Endothelial cell of umbilical vein (primary cell): ENCODE measurements at regions of chrX and their contacts with region 1.

Region 1: GRCh38 chrX:136028251-136028984 is 43.2 kb downstream of the SLC9A6 start:
- DNase-seq: peak; percentile 67
- H3K4me3 ChIP-seq: no peak overlapping the region
- H3K27ac ChIP-seq: no peak overlapping the region
- H3K4me1 ChIP-seq: peaks cover 18% of the 10 kb centered on the region
- H3K27me3 ChIP-seq: no peaks in the 10 kb centered on the region
- CTCF ChIP-seq: peak; percentile 21 to 24
- POLR2A ChIP-seq: no peak

Region 2: DNA sequence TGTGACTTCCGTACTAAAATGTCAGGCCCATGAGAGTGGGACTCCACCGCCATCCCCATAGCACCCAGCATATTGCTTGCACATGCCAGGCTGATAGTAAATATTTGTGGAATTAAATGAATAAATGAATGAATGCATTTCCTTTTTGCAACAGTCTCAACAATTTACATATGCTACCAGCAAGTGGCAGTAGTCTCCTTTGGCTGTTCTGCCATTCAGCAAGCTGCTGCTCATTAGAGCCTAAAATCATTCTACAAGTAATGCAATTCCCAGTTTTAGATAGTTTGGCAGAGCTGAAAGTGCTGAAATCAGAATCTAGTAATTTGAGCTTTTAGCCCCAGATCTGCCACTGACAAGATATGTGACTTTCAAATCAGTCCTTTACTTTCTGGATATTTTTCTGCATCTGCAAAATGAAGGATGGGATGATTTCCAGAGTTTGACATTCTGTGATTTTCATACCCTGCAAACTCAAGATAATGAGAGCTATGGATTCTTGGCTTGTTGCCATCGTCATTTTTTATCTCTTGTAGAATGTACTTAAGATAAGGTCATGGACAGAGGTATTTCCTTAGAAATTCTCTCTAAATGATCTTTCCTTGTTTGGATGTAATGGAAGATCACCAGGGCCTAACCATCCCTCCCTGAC is 543.7 kb before region 1 on chrX:
- CTCF ChIA-PET with region 1: no interaction called
- POLR2A ChIA-PET with region 1: no interaction called
- dilution Hi-C with region 1: no loop called
- intact Hi-C with region 1: no loop called
- DNase-seq: peak; percentile 46
- H3K4me3 ChIP-seq: no peak overlapping the region
- H3K27ac ChIP-seq: no peak overlapping the region
- H3K4me1 ChIP-seq: no peaks in the 10 kb centered on the region
- H3K27me3 ChIP-seq: no peaks in the 10 kb centered on the region
- CTCF ChIP-seq: peak; percentile 32 to 45
- POLR2A ChIP-seq: no peak

Region 3: DNA sequence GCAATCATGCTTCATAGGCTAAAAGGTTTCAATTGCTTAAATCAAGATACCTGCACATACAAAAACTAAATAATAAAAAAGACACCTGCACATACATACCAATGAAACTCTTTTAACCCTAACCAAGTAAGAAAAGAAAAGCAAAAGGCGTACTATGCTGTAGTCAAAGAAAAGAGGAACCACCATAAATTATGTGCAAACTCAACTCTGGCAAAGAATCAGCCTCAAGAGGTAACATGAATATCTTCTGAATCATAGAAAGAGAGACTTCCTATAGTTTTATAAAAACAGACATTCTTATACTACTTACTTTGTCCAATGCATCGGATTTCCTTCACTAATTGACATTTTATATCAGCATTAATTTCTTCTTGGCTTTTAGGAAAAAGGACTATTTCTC is 83.9 kb before region 1 on chrX:
- CTCF ChIA-PET with region 1: no interaction called
- POLR2A ChIA-PET with region 1: no interaction called
- dilution Hi-C with region 1: no loop called
- intact Hi-C with region 1: no loop called
- DNase-seq: no peak
- H3K4me3 ChIP-seq: no peak overlapping the region
- H3K27ac ChIP-seq: no peak overlapping the region
- H3K4me1 ChIP-seq: no peaks in the 10 kb centered on the region
- H3K27me3 ChIP-seq: no peaks in the 10 kb centered on the region
- CTCF ChIP-seq: no peak
- POLR2A ChIP-seq: no peak

Region 4: GRCh38 chrX:136055651-136056221 is 27.3 kb after region 1 on chrX:
- CTCF ChIA-PET with region 1: interaction called, 12 read pairs
- POLR2A ChIA-PET with region 1: interaction called, 3 read pairs
- dilution Hi-C with region 1: no loop called
- intact Hi-C with region 1: loop called (anchors 1 kb)
- DNase-seq: peak; percentile 86
- H3K4me3 ChIP-seq: no peak overlapping the region
- H3K27ac ChIP-seq: peak overlapping the region; percentile 73
- H3K4me1 ChIP-seq: peaks cover 14% of the 10 kb centered on the region
- H3K27me3 ChIP-seq: no peaks in the 10 kb centered on the region
- CTCF ChIP-seq: no peak
- POLR2A ChIP-seq: no peak

Region 5: DNA sequence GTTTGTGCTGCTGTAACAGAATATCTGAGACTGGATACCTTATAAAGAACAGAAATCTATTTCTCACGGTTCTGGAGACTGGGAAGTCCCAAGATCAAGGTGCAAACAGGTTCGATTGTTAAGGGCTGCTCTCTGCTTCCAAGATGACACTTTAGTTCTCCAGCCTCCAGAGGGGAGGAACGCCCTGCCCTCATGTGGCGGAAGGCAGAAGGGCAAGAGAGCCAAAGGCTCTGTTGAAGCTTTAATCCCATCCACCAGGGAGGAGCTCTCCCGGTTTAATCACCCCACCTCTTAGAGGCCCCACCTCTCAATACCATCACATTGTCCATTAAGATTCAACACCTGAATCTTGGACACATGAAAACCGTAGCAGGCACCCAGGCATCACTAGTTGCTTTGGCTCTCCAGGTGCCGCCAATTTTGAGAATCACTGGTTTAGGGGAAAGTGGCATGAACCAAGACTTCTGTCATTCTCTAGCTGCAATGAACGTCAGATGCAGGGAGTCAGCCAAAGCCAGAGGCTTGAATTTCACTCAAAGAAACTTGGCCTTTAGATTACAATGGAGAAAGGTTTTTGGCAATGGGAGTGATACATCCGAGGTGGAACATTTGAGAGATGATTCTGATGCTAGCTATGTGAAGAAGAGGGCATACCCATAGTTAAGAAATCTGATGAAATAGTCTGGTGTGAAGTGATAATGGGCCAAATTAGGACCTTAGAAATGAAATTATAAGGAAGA is 134.6 kb after region 1 on chrX:
- CTCF ChIA-PET with region 1: interaction called, 269 read pairs
- POLR2A ChIA-PET with region 1: interaction called, 4 read pairs
- dilution Hi-C with region 1: no loop called
- intact Hi-C with region 1: loop called (anchors 1 kb)
- DNase-seq: peak; percentile 59
- H3K4me3 ChIP-seq: no peak overlapping the region
- H3K27ac ChIP-seq: no peak overlapping the region
- H3K4me1 ChIP-seq: no peaks in the 10 kb centered on the region
- H3K27me3 ChIP-seq: no peaks in the 10 kb centered on the region
- CTCF ChIP-seq: peak; percentile 61 to 71
- POLR2A ChIP-seq: no peak

Region 6: GRCh38 chrX:136191171-136191570 is 162.8 kb after region 1 on chrX:
- CTCF ChIA-PET with region 1: interaction called, 11 read pairs
- POLR2A ChIA-PET with region 1: no interaction called
- dilution Hi-C with region 1: no loop called
- intact Hi-C with region 1: no loop called
- DNase-seq: peak; percentile 65
- H3K4me3 ChIP-seq: no peak overlapping the region
- H3K27ac ChIP-seq: no peak overlapping the region
- H3K4me1 ChIP-seq: peaks cover 39% of the 10 kb centered on the region
- H3K27me3 ChIP-seq: no peaks in the 10 kb centered on the region
- CTCF ChIP-seq: no peak
- POLR2A ChIP-seq: no peak

Region 7: DNA sequence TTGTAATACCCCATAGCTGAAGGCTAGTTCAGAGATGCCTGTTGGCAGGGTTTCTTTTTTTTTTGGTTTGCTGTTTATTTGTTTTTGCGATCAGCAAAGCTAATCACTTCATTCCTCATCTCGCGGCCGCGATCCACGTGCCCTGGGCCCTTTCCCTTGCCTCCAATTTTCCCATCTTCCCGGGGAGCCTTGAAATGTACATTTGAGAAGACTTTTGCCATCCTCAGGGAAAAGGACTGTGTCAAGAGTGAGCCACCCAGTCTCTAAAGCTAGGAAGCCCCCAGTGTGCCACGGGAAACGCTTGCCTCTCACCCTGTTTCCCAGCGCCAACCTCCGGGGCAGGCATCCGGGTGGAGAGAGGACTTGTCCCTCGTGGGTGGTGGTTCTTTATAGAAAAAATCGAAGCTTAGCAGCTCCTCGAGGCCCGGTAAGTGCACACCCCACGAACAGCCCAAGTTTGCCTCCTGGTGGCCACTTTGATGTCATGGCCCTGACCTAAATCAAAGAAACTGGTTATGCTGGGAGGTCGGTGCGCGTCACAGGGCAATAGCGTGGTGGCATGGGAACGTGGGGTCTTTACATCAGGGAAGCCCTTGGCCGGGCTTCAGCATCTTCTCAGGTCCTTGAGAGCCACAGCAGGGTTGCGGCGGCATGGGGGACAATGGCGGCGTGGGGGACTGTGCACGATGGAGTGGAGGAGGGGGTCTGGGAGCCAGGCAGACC is 180.8 kb after region 1 on chrX:
- CTCF ChIA-PET with region 1: interaction called, 134 read pairs
- POLR2A ChIA-PET with region 1: interaction called, 3 read pairs
- dilution Hi-C with region 1: no loop called
- intact Hi-C with region 1: loop called (anchors 1 kb)
- DNase-seq: peak; percentile 55
- H3K4me3 ChIP-seq: no peak overlapping the region
- H3K27ac ChIP-seq: no peak overlapping the region
- H3K4me1 ChIP-seq: peaks cover 6% of the 10 kb centered on the region
- H3K27me3 ChIP-seq: no peaks in the 10 kb centered on the region
- CTCF ChIP-seq: peak; percentile 36 to 62
- POLR2A ChIP-seq: no peak

Region 8: GRCh38 chrX:136496770-136497598 is 468.6 kb after region 1 on chrX and contains the start of gene HTATSF1:
- CTCF ChIA-PET with region 1: interaction called, 5 read pairs
- POLR2A ChIA-PET with region 1: no interaction called
- dilution Hi-C with region 1: no loop called
- intact Hi-C with region 1: loop called (anchors 10 kb)
- DNase-seq: peak; percentile 84
- H3K4me3 ChIP-seq: peak within 1 kb of the TSS; percentile 46 to 89 (median 76)
- H3K27ac ChIP-seq: peak within 1 kb of the TSS; percentile 94
- H3K4me1 ChIP-seq: peaks cover 7% of the 10 kb centered on the region
- H3K27me3 ChIP-seq: no peaks in the 10 kb centered on the region
- CTCF ChIP-seq: no peak
- POLR2A ChIP-seq: no peak
- total RNA-seq, gene HTATSF1: 30.4 and 31.1 TPM in 2 replicates

Region 9: GRCh38 chrX:136694431-136695087 is 666.1 kb after region 1 on chrX:
- CTCF ChIA-PET with region 1: interaction called, 16 read pairs
- POLR2A ChIA-PET with region 1: no interaction called
- dilution Hi-C with region 1: no loop called
- intact Hi-C with region 1: no loop called
- DNase-seq: peak; percentile 19
- H3K4me3 ChIP-seq: no peak overlapping the region
- H3K27ac ChIP-seq: no peak overlapping the region
- H3K4me1 ChIP-seq: no peaks in the 10 kb centered on the region
- H3K27me3 ChIP-seq: no peaks in the 10 kb centered on the region
- CTCF ChIP-seq: peak; percentile 32 to 33
- POLR2A ChIP-seq: no peak

Region 10: GRCh38 chrX:136839196-136839595 is 810.8 kb after region 1 on chrX:
- CTCF ChIA-PET with region 1: no interaction called
- POLR2A ChIA-PET with region 1: no interaction called
- dilution Hi-C with region 1: no loop called
- intact Hi-C with region 1: no loop called
- DNase-seq: no peak
- H3K4me3 ChIP-seq: no peak overlapping the region
- H3K27ac ChIP-seq: no peak overlapping the region
- H3K4me1 ChIP-seq: no peaks in the 10 kb centered on the region
- H3K27me3 ChIP-seq: no peaks in the 10 kb centered on the region
- CTCF ChIP-seq: no peak
- POLR2A ChIP-seq: no peak